ENCODE measurements at regions of chr6 and their contacts with region 1.

Region 1: GRCh38 chr6:116010790-116011401 is 49.8 kb downstream of the FRK start:
- DNase-seq: peak; percentile 23 to 70 (median 54)
- ATAC-seq: peak; percentile 84 to 88 (median 84)
- H3K4me3 ChIP-seq: no peak overlapping the region
- H3K27ac ChIP-seq: peak overlapping the region in 2 of 4 donors; percentile 10 to 50
- H3K4me1 ChIP-seq: peaks cover 2 to 33% (median 28%) of the 10 kb centered on the region in 3 donors
- H3K27me3 ChIP-seq: no peaks in the 10 kb centered on the region
- CTCF ChIP-seq: peak; percentile 58 to 71 (median 66)

Region 2: DNA sequence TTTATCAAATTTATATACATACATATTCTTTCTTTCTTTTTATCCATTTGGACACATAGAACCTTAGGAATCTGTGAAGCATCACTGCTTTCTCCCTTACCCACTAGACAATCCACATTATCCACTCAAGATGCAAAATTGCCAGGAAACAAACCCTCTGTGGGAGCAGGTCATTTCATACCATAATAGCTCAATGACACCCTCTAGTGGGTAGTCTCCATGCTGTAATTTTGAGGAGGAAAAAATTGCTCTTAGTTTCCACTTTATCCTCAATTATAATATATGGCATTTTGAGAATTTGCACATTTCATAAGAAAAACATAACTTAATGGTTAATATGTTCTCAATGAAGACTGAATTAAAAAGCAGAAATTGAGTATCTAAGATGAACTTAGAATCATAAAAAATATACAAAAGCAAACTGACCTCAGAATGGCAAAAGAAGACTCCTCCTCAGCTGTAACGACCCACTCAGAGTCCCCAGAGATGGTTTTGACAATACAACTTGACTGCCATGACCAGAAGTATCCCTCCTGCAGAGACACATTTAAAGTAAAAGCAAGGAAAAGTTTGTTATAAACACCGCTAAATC is 114.3 kb before region 1 on chr6:
- intact Hi-C with region 1: no loop called
- DNase-seq: no peak
- ATAC-seq: peak in 3 of 4 donors; percentile 70 to 76 (median 72)
- H3K4me3 ChIP-seq: no peak overlapping the region
- H3K27ac ChIP-seq: no peak overlapping the region
- H3K4me1 ChIP-seq: peaks cover 0 to 3% (median 0%) of the 10 kb centered on the region in 3 donors
- H3K27me3 ChIP-seq: no peaks in the 10 kb centered on the region
- CTCF ChIP-seq: peak; percentile 20 to 61 (median 56)

Region 3: DNA sequence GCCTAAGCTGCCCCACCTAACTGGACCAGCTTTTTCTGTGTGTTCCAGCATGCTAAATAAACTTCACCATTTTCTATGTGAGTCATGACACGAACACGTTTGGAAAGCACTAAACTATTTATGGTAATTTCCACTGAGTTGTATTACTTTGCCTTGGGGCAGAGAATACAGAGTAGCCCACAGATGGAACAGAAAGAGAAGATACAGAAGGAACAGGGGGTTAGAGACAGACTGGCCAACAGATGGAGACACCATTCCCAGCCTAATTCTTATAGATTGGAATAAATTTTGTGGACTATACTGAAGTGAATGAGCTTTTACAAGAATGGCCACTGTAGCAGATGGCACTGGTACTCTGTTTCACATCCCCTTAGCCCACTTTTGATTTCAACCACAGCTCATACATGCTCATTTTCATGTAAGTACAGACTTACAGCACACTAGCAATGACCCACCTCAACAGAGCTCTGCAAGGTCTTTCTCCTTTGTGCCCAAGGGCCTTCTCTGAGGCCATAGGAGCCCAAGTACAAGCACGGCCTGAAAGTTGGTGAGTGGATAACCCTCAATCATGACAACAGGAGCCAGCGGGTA is 76.6 kb after region 1 on chr6:
- intact Hi-C with region 1: loop called in 2 of 3 experiments (anchors 5 to 10 kb)
- DNase-seq: no peak
- ATAC-seq: no peak
- H3K4me3 ChIP-seq: no peak overlapping the region
- H3K27ac ChIP-seq: no peak overlapping the region
- H3K4me1 ChIP-seq: no peaks in the 10 kb centered on the region
- H3K27me3 ChIP-seq: no peaks in the 10 kb centered on the region
- CTCF ChIP-seq: no peak

Region 4: DNA sequence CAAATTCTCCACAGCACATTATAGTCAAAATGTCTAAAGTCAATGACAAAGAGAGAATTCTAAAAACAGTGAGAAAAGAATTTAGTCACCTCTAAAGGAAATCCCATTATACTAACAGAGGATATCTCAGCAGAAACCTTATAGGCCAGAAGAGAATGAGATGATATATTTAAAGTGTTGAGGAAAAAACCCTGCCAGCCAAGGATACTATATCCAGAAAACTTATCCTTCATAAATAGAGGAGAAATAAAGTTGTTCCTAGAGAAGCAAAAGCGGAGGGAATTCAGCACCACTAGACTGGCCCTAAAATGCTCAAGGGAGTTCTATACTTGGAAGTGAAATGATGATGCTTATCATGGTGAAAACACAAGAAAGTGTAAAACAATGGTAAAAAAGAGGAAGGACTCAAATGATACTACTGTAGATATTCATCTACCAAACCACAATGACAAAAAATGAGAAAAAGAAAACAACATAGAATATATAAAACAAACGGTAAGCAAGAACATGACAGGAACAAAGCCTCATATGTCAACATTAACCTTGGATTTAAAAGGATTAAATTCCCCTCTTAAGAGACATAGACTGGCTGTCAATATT is 801.3 kb after region 1 on chr6:
- intact Hi-C with region 1: no loop called
- DNase-seq: no peak
- ATAC-seq: no peak
- H3K4me3 ChIP-seq: no peak overlapping the region
- H3K27ac ChIP-seq: no peak overlapping the region
- H3K4me1 ChIP-seq: no peaks in the 10 kb centered on the region
- H3K27me3 ChIP-seq: no peaks in the 10 kb centered on the region
- CTCF ChIP-seq: no peak

Measured in pancreas (tissue), 10 donors.